Activated T-helper 2 cell treated with anti-CD3 and anti-CD28 coated beads, Interferon-gamma antibody, Interleukin-2, Interleukin-4, amounts not matched to agents 10 μg/mL and 5 μg/mL and 100 μg/mL, durations not matched to agents 14 hours and 24 hours and 36 hours (primary cell): ENCODE measurements at regions of chr1 and their contacts with region 1.

Region 1: DNA sequence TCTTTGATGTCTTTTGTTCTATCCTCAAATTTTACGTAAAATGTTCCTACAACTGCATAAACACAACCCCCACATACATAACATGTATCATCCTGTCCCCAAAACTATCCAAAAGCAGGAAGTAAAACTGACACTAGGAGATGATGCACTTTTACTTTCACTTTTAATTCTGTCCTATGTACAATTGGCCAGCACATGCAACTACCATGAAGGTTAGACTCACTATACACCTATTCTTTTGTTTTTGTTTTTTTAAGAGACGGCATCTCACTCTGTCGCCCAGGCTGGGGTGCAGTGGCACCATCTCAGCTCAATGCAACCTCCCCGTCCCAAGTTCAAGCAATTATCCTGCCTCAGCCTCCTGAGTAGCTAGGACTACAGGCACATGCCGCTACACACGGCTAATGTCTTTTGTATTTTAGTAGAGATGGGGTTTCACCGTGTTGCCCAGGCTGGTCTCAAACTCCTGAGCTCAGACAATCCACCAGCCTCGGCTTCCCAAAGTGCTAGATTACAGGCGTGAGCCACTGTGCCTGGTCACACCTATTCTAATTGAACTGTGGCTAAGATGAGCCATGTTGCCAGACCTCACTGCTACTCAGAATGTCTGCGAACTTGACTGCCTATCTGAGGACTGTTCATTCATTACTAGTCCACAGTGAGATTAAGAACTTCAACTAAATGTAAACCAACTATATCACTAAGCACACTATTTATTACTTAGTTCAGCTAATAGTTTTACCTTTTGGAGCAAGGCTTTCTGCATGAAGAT is 48.0 kb downstream of the TOR3A start:
- DNase-seq: peak; percentile 23
- H3K4me3 Mint-ChIP-seq: peak overlapping the region; percentile 72
- H3K27ac Mint-ChIP-seq: peak overlapping the region; percentile 93
- H3K4me1 Mint-ChIP-seq: peaks cover 13% of the 10 kb centered on the region
- H3K27me3 Mint-ChIP-seq: no peaks in the 10 kb centered on the region

Region 2: DNA sequence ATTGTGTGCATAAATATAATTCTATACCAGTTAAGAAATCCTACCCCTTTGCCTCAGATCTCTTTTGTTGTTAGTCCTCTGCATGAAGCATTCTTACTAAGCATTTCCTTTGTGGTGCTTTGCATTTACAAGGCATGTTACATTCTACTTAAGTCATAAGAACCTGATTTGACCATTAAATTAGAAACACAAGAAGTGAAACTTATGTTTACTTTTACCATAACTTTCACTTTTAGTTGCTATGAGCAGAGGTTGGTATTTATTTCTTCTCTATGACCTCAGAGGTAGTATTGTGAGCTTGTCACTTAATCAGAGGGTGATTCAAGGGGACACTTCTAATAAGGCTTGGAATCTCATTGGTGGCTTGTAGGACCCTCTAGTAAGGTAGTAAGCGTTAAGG is 95.2 kb before region 1 on chr1:
- intact Hi-C with region 1: loop called (anchors 1 kb)
- DNase-seq: no peak
- H3K4me3 Mint-ChIP-seq: no peak overlapping the region
- H3K27ac Mint-ChIP-seq: peak overlapping the region; percentile 82
- H3K4me1 Mint-ChIP-seq: peaks cover 77% of the 10 kb centered on the region
- H3K27me3 Mint-ChIP-seq: no peaks in the 10 kb centered on the region

Region 3: DNA sequence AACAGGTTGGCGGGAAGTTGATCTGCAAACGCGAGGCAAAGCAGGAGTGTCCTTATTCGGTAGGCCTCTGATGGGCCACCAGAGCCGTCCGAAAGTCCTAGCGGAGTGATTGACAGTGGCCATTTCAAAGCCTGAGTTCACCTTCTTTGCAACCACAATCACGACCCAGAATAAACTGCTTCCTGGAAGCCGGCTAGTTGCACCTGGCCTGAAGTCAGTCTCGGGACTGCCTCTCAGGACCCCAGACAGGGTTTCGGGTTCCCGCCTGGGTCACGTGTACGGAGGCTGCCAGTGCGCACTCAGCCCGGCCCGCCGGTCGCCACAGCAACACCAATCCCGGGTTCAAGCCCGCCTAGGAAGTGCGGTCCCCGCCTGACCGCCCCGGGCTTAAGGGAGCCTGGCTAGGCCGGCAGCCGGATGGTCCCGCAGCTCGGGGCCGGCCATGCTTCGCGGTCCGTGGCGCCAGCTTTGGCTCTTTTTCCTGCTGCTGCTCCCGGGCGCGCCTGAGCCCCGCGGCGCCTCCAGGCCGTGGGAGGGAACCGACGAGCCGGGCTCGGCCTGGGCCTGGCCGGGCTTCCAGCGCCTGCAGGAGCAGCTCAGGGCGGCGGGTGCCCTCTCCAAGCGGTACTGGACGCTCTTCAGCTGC is 48.1 kb before region 1 on chr1 and contains the start of gene TOR3A:
- intact Hi-C with region 1: loop called (anchors 1 kb)
- DNase-seq: peak; percentile 75
- H3K4me3 Mint-ChIP-seq: peak within 1 kb of the TSS; percentile 97
- H3K27ac Mint-ChIP-seq: peak within 1 kb of the TSS; percentile 96
- H3K4me1 Mint-ChIP-seq: peaks cover 20% of the 10 kb centered on the region
- H3K27me3 Mint-ChIP-seq: no peaks in the 10 kb centered on the region
- total RNA-seq, gene TOR3A: 34.1 and 35.3 TPM in 2 replicates

Region 4: GRCh38 chr1:179190861-179191260 is 61.0 kb after region 1 on chr1:
- intact Hi-C with region 1: no loop called
- DNase-seq: no peak
- H3K4me3 Mint-ChIP-seq: no peak overlapping the region
- H3K27ac Mint-ChIP-seq: peak overlapping the region; percentile 42
- H3K4me1 Mint-ChIP-seq: peaks cover 15% of the 10 kb centered on the region
- H3K27me3 Mint-ChIP-seq: no peaks in the 10 kb centered on the region

Region 5: GRCh38 chr1:179202161-179202560 is 72.3 kb after region 1 on chr1:
- intact Hi-C with region 1: loop called (anchors 2 kb)
- DNase-seq: no peak
- H3K4me3 Mint-ChIP-seq: no peak overlapping the region
- H3K27ac Mint-ChIP-seq: no peak overlapping the region
- H3K4me1 Mint-ChIP-seq: peaks cover 18% of the 10 kb centered on the region
- H3K27me3 Mint-ChIP-seq: no peaks in the 10 kb centered on the region

Region 6: GRCh38 chr1:179229214-179230140 is 99.6 kb after region 1 on chr1 and contains the start of gene ABL2:
- intact Hi-C with region 1: loop called (anchors 1 kb)
- DNase-seq: peak; percentile 34
- H3K4me3 Mint-ChIP-seq: peak within 1 kb of the TSS; percentile 91
- H3K27ac Mint-ChIP-seq: peak within 1 kb of the TSS; percentile 79
- H3K4me1 Mint-ChIP-seq: peaks cover 24% of the 10 kb centered on the region
- H3K27me3 Mint-ChIP-seq: peaks cover 8% of the 10 kb centered on the region
- total RNA-seq, gene ABL2: 7.7 and 8.5 TPM in 2 replicates